ENCODE measurements at regions of chrX and their contacts with region 1.

Region 1: DNA sequence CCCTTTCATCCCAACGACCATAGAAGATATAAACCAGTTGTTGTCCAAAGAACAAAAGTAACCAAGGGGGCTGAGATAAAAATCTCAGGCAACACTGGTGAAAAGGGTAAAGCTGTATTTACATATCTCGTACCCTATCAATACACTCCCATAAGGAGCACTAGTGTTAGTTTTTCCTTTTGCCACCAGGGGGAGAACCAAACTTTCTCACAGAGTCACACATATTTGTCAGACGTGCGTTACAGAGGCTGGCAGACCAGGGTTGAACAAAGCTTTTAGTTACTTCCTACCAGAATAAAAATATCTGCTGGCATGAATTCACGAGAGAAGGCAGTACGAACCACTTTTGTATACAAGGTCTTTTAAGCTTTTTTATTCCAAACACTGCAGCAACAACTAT is 88.3 kb downstream of the AMELX start:
- DNase-seq: peak; percentile 10
- H3K4me3 ChIP-seq: no peak overlapping the region
- CTCF ChIP-seq: peak; percentile 44

Region 2: DNA sequence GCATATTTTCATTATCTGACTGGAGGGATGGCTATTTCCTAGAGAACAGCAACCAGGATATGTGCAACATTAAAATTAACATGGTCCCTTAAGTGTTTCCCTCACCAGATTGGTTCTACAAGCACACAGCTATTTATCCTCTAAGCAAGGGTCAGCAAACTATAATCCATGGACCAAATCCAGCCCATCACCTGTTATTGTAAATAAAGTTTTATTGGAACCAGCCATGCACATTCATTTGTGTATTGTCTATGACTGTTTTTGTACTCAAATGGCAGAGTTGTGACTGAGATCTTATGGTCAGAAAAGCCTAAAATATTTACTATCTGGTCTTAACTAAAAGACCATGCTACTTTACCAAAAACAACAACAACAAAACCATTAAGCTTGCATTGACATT is 10.4 kb before region 1 on chrX:
- CTCF ChIA-PET with region 1: interaction called, 20 read pairs
- POLR2A ChIA-PET with region 1: no interaction called
- DNase-seq: no peak
- H3K4me3 ChIP-seq: no peak overlapping the region
- CTCF ChIP-seq: no peak

Region 3: GRCh38 chrX:11395859-11396258 is 14.4 kb after region 1 on chrX:
- CTCF ChIA-PET with region 1: interaction called, 21 read pairs
- POLR2A ChIA-PET with region 1: no interaction called
- DNase-seq: no peak
- H3K4me3 ChIP-seq: no peak overlapping the region
- CTCF ChIP-seq: no peak